Heart right ventricle (tissue), 16 donors: ENCODE measurements at regions of chr6 and their contacts with region 1.

Region 1: DNA sequence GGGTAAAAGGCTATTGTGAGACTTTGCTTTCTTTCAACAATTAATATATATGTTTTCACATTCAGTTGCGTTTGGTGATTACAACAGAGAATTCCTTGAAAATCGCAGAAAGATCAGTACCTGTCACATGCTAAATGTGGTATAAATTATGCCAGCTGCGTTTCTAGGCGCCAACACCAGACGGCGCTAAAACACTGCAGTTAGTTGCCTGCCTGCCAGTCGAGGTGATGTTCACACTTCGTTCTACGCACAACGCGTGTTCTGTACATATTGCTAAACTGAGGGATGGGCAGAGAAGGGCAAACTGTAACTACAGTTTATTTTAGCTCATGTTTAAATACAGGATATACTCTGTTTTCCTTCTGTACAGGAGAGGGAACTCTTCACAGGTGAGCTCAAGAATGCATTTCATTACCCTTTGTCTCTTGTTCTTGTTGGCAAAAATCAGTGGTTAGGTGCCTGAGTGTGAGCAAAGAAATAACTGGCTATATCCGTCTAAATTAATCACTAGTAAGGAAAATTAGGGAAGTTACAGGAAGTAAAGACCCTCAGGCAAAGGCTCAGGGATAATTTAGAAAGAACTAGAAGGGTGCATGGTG is 100.1 kb upstream of the RGS17 start:
- DNase-seq: peak; percentile 31 to 38
- ATAC-seq: peak in 1 of 8 donors; percentile 39
- H3K4me3 ChIP-seq: no peak overlapping the region
- H3K27ac ChIP-seq: no peak overlapping the region
- H3K4me1 ChIP-seq: no peaks in the 10 kb centered on the region
- H3K27me3 ChIP-seq: no peaks in the 10 kb centered on the region
- CTCF ChIP-seq: peak; percentile 50 to 86 (median 77)

Region 2: GRCh38 chr6:153424719-153425400 is 193.7 kb after region 1 on chr6:
- intact Hi-C with region 1: no loop called
- DNase-seq: no peak
- ATAC-seq: no peak
- H3K4me3 ChIP-seq: no peak overlapping the region
- H3K27ac ChIP-seq: no peak overlapping the region
- H3K4me1 ChIP-seq: no peaks in the 10 kb centered on the region
- H3K27me3 ChIP-seq: no peaks in the 10 kb centered on the region
- CTCF ChIP-seq: no peak

Region 3: GRCh38 chr6:153947808-153948447 is 716.8 kb after region 1 on chr6:
- intact Hi-C with region 1: loop called in 8 of 10 experiments (anchors 2 to 10 kb)
- DNase-seq: peak in 1 of 2 donors; percentile 8
- ATAC-seq: no peak
- H3K4me3 ChIP-seq: no peak overlapping the region
- H3K27ac ChIP-seq: no peak overlapping the region
- H3K4me1 ChIP-seq: no peaks in the 10 kb centered on the region
- H3K27me3 ChIP-seq: peaks cover 0 to 2% (median 0%) of the 10 kb centered on the region in 7 donors
- CTCF ChIP-seq: peak; percentile 47 to 91 (median 83)

Region 4: GRCh38 chr6:153957394-153957793 is 726.2 kb after region 1 on chr6:
- intact Hi-C with region 1: loop called in 1 of 10 experiments (anchors 10 kb)
- DNase-seq: no peak
- ATAC-seq: no peak
- H3K4me3 ChIP-seq: no peak overlapping the region
- H3K27ac ChIP-seq: no peak overlapping the region
- H3K4me1 ChIP-seq: no peaks in the 10 kb centered on the region
- H3K27me3 ChIP-seq: no peaks in the 10 kb centered on the region
- CTCF ChIP-seq: no peak

Region 5: DNA sequence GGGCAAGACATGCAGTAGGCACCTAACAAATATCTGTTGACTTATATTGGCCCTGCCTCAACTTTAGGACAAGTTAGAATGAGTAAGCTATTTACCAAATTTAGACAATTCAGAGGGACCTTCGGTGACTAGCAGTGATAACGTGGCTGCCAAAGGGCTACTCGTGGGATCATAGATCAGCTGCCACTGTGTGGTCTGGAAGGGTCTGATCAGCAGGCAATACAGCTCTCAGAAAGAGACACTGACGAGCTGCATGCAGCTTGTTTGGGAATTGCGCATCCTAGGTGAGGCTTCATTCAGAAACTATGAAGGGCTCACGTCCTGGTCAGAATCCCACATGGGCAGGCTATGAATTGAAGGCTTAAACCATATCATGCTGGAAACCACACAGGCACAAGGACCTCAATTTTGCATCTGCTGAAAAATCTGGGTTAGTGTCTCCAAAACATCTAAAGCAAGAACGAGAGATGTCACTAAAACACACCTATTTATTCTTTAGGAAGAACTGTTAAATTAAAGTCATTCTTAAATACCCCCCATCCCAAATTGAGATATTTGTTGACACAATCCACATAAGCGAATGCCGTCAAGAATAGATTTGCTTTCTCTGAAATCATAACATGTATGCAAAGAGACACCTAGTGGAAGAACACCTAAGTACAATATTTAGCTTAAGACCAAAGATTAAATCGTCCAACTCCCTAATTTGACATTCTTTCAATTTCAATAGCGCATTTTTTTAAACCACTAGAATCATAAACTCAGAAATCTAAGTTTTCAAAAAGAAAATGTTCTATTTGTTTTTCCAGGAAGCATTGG is 1045.9 kb after region 1 on chr6:
- intact Hi-C with region 1: loop called in 1 of 10 experiments (anchors 10 kb)
- DNase-seq: no peak
- ATAC-seq: peak in 2 of 8 donors; percentile 35 to 39
- H3K4me3 ChIP-seq: peak overlapping the region in 3 of 10 donors; percentile 1 to 10 (median 5)
- H3K27ac ChIP-seq: no peak overlapping the region
- H3K4me1 ChIP-seq: peaks cover 0 to 13% (median 3%) of the 10 kb centered on the region in 9 donors
- H3K27me3 ChIP-seq: no peaks in the 10 kb centered on the region
- CTCF ChIP-seq: peak in 8 of 9 donors; percentile 34 to 74 (median 64)